PC-9 (cell line): ENCODE measurements at regions of chr2 and their contacts with region 1.

Region 1: DNA sequence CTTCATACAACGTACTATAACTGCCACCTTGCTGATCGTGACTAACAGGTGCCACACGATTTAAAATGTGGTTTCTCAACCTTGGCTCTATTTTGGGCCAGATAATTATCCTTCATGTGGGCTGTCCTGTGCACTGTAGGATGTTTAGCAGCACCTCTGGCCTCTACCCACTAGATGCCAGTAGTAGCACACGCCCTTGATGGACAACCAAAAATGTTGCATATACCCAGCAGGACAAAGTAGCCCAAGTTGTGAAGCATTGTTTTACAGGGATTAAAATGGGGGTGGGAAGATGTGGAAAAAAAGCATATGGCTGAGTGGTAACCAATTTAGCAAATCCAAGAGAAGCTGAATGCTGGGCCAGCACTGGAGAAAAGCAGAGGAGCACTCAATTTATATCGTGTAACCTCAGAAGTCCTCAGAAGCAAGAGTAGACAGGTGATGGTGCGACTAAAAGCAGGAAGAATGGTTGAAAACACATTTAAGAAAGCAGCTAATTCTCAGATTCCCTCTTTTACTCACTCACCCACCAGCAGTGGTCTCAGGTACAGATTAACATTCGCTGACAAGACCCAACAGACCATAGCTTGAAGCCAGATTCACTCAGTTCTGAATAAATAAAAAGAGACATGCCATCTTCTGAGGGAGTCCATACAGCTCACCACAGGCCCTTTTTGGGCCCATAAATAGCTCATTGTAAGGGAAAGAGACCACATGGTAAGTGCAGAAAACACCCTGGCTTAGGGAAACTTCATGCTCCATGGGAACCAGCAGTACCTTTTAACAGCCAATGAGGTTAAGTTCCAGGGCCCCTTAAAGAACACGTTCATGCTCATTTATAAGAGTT is 50.6 kb downstream of the RAPH1 start:
- DNase-seq: peak in 1 of 2 experiments; percentile 19
- H3K4me3 ChIP-seq: no peak overlapping the region
- H3K27ac ChIP-seq: no peak overlapping the region
- H3K4me1 ChIP-seq: no peaks in the 10 kb centered on the region
- H3K27me3 ChIP-seq: no peaks in the 10 kb centered on the region
- CTCF ChIP-seq: peak; percentile 64

Region 2: GRCh38 chr2:203650860-203651613 is 166.5 kb after region 1 on chr2:
- CTCF ChIA-PET with region 1: interaction called, 3 read pairs
- POLR2A ChIA-PET with region 1: no interaction called
- intact Hi-C with region 1: loop called (anchors 1 kb)
- DNase-seq: no peak
- H3K4me3 ChIP-seq: no peak overlapping the region
- H3K27ac ChIP-seq: no peak overlapping the region
- H3K4me1 ChIP-seq: peaks cover 42% of the 10 kb centered on the region
- H3K27me3 ChIP-seq: no peaks in the 10 kb centered on the region
- CTCF ChIP-seq: peak; percentile 60

Region 3: DNA sequence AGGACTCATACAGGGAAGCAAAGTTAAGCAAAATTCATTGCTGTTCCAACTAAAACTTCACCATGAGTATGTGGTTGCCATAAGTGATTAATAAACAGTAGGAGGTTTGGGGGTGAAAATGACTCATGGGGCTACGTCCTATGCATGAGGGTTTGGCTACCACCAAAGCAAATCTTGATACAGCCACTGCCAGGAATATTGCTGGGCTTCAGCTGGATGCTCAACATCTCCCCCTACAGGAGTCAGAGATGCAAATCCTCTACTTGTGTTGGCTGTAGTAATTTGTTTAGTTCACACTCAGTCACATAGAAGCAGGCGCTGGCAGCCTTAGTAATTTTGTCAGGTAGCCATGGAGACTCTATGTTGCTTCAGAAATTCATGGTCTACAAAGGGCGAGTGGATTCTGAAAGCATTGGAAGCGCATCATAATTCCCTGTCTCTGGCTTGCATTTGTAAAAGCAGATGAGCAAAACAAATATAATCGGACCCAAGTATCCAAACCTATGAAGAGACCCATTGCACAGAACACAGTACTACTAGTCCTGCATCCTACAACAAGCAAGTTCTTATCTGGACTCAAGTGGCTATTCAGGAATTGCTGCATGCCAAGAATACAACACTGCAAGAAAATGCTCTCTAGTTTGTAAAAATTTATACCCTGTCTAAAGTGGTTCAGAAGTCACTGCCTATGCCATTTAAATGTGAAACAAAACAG is 297.9 kb after region 1 on chr2:
- CTCF ChIA-PET with region 1: no interaction called
- POLR2A ChIA-PET with region 1: no interaction called
- intact Hi-C with region 1: loop called (anchors 1 kb)
- DNase-seq: peak; percentile 57 to 85
- H3K4me3 ChIP-seq: no peak overlapping the region
- H3K27ac ChIP-seq: no peak overlapping the region
- H3K4me1 ChIP-seq: peaks cover 12% of the 10 kb centered on the region
- H3K27me3 ChIP-seq: no peaks in the 10 kb centered on the region
- CTCF ChIP-seq: peak; percentile 70

Region 4: GRCh38 chr2:203909261-203909967 is 424.9 kb after region 1 on chr2:
- CTCF ChIA-PET with region 1: no interaction called
- POLR2A ChIA-PET with region 1: no interaction called
- intact Hi-C with region 1: loop called (anchors 2 kb)
- DNase-seq: peak in 1 of 2 experiments; percentile 10
- H3K4me3 ChIP-seq: no peak overlapping the region
- H3K27ac ChIP-seq: no peak overlapping the region
- H3K4me1 ChIP-seq: no peaks in the 10 kb centered on the region
- H3K27me3 ChIP-seq: no peaks in the 10 kb centered on the region
- CTCF ChIP-seq: peak; percentile 74